Heart left ventricle (tissue), 16 donors: ENCODE measurements at regions of chr15 and their contacts with region 1.

Region 1: GRCh38 chr15:76866716-76867321 is 38.3 kb downstream of the SCAPER start:
- DNase-seq: no peak
- ATAC-seq: peak in 3 of 4 donors; percentile 43 to 69 (median 62)
- H3K4me3 ChIP-seq: no peak overlapping the region
- H3K27ac ChIP-seq: peak overlapping the region in 7 of 12 donors; percentile 5 to 65 (median 20)
- H3K4me1 ChIP-seq: peaks cover 0 to 36% (median 12%) of the 10 kb centered on the region in 12 donors
- H3K27me3 ChIP-seq: no peaks in the 10 kb centered on the region
- CTCF ChIP-seq: peak in 11 of 12 donors; percentile 26 to 60 (median 46)
- POLR2A ChIP-seq: no peak

Region 2: DNA sequence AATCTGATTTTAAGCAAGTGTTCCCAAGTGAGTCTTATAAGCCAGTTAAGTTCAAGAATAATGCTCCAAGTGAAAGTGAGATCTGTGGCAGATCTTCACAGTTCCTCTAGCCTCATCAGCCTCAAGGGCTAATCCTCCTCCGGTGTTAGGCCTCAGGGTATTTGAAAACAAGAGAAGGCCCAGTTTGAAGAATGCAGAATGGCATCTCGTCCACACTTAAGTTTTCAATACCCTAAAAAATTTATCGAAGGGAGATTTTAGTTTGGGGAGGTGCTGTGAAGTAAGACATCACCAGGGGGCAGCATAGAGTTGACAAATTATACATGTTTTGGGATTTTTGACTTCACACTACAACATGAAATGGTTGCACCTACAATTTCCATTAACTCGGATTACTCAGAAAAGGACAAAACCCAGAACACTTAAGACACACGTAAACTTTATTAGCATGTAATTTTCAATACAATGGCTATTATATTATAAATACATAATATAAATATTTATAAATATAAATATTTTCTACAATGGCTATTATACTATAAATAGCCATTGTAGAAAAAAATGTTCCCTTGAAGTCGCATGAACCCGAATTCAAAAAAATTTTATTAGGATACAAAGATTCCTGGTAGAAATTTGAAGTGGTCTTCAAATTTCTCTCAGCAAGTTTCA is 809.4 kb before region 1 on chr15:
- intact Hi-C with region 1: loop called in 1 of 10 experiments (anchors 10 kb)
- DNase-seq: peak in 1 of 5 donors; percentile 14
- ATAC-seq: no peak
- H3K4me3 ChIP-seq: peak overlapping the region in 1 of 12 donors; percentile 6
- H3K27ac ChIP-seq: no peak overlapping the region
- H3K4me1 ChIP-seq: peaks cover 0 to 23% (median 8%) of the 10 kb centered on the region in 12 donors
- H3K27me3 ChIP-seq: peaks cover 0 to 55% (median 17%) of the 10 kb centered on the region in 9 donors
- CTCF ChIP-seq: peak; percentile 56 to 80 (median 68)
- POLR2A ChIP-seq: no peak

Region 3: GRCh38 chr15:76190834-76191538 is 675.8 kb before region 1 on chr15:
- intact Hi-C with region 1: loop called in 5 of 10 experiments (anchors 5 to 10 kb)
- DNase-seq: peak; percentile 70 to 86 (median 80)
- ATAC-seq: peak; percentile 75 to 91 (median 86)
- H3K4me3 ChIP-seq: peak overlapping the region in 2 of 12 donors; percentile 15 to 21
- H3K27ac ChIP-seq: no peak overlapping the region
- H3K4me1 ChIP-seq: peaks cover 0 to 17% (median 8%) of the 10 kb centered on the region in 12 donors
- H3K27me3 ChIP-seq: peaks cover 0 to 58% (median 5%) of the 10 kb centered on the region in 9 donors
- CTCF ChIP-seq: peak; percentile 73 to 92 (median 86)
- POLR2A ChIP-seq: no peak

Region 4: DNA sequence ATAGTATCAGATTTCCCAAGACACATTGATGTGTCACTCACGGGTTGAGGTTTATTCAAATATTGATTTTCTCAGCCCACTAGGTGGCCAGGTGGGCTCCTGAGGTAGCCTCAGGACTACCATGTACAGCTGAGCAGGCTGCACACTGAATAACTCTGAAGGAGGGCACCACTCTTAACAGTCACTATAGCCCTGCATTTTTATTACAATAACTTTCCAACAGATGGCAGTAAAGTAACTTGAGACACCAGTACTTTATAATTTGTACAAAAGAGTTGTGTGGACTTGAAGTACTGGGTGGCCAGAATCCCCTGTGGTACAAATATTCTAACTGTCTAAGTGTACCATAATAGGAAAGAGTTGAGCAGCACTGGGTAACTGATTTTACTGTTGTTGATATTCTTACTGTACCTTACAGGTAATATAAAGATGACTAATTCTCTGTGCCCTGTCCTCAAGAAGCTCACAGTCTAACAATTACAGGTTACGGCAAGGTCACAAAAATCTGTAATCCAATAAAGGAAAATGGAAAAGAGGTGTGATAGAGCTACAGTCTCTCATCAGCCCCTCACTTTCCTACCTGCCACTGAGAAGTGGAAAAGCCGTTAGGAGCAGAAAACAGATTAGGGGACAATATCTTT is 631.5 kb before region 1 on chr15:
- intact Hi-C with region 1: loop called in 2 of 10 experiments (anchors 5 to 10 kb)
- DNase-seq: no peak
- ATAC-seq: peak; percentile 71 to 83 (median 75)
- H3K4me3 ChIP-seq: no peak overlapping the region
- H3K27ac ChIP-seq: no peak overlapping the region
- H3K4me1 ChIP-seq: peaks cover 0 to 10% (median 0%) of the 10 kb centered on the region in 12 donors
- H3K27me3 ChIP-seq: no peaks in the 10 kb centered on the region
- CTCF ChIP-seq: peak; percentile 38 to 63 (median 51)
- POLR2A ChIP-seq: no peak

Region 5: GRCh38 chr15:76336254-76337058 is 530.4 kb before region 1 on chr15 and contains the start of gene ISL2:
- intact Hi-C with region 1: loop called in 1 of 10 experiments (anchors 10 kb)
- DNase-seq: peak in 3 of 5 donors; percentile 53 to 80 (median 54)
- ATAC-seq: peak in 1 of 4 donors; percentile 27
- H3K4me3 ChIP-seq: peak within 1 kb of the TSS in 9 of 12 donors; percentile 1 to 53 (median 21)
- H3K27ac ChIP-seq: peak within 1 kb of the TSS in 1 of 12 donors; percentile 30
- H3K4me1 ChIP-seq: peaks cover 3 to 67% (median 41%) of the 10 kb centered on the region in 12 donors
- H3K27me3 ChIP-seq: peaks cover 70 to 92% (median 85%) of the 10 kb centered on the region in 9 donors
- CTCF ChIP-seq: no peak
- POLR2A ChIP-seq: no peak
- total RNA-seq, gene ISL2: not detected

Region 6: GRCh38 chr15:76667943-76668715 is 198.7 kb before region 1 on chr15:
- intact Hi-C with region 1: loop called in 1 of 10 experiments (anchors 10 kb)
- DNase-seq: no peak
- ATAC-seq: no peak
- H3K4me3 ChIP-seq: no peak overlapping the region
- H3K27ac ChIP-seq: peak overlapping the region in 1 of 12 donors; percentile 15
- H3K4me1 ChIP-seq: peaks cover 0 to 10% (median 0%) of the 10 kb centered on the region in 12 donors
- H3K27me3 ChIP-seq: no peaks in the 10 kb centered on the region
- CTCF ChIP-seq: no peak
- POLR2A ChIP-seq: no peak